IMR-90 (cell line): ENCODE measurements at regions of chr2 and their contacts with region 1.

Region 1: GRCh38 chr2:234550511-234551107 is 53.7 kb upstream of the ARL4C start:
- DNase-seq: peak; percentile 86
- ATAC-seq: peak; percentile 96
- H3K4me3 ChIP-seq: no peak overlapping the region
- H3K27ac ChIP-seq: no peak overlapping the region
- H3K4me1 ChIP-seq: peaks cover 5% of the 10 kb centered on the region; the same call in 1 of the 2 replicates
- H3K27me3 ChIP-seq: no peaks in the 10 kb centered on the region; the same call in 1 of the 2 replicates
- CTCF ChIP-seq: peak; percentile 96
- POLR2A ChIP-seq: peak; percentile 47; the same call in 1 of the 2 replicates
- RAD21 ChIP-seq: peak; percentile 99

Region 2: DNA sequence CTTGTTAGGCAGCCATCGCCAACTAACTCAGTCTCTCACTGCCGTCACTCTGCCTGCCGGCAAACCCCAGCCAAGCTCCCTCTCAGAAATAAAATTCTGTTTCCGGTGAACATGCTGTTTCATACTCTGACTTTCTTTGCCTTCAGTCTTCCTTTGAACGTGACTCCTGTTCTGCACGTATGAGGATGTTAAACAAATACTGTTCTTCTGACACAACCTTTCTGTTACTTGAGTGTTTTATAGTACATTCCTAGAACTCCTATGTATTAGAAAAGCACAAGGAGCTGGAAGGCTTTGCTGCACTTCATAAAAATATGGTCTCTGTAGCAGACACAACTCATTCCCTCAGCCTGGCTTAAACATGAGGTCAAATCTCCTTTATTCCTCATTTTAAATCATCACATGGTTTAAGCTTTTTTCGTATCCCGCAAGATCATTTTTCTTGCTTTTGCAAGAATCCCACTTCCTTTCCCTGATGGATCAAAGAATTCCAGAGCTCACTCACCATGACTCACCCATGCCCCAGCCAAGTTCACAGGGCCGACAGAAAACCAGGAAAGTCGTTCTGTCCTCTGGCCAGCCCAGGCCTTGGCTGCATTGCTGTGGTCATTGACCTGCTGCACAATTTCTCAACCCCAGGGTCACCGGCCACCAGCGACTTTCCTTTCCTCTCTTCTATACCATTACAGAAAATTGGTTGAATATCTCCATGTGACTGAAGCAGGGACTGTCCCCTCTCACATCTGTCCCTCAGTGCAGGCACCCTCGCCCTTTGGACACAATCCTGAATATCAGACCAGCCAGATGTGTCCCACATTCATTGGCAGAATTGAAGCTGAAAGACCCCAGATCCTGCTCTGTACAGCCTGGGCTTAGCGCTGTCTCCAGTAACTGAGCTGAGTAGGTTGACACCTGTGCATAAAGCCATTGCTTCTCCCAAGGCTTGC is 129.4 kb after region 1 on chr2:
- CTCF ChIA-PET with region 1: no interaction called
- POLR2A ChIA-PET with region 1: no interaction called
- dilution Hi-C with region 1: no loop called
- in situ Hi-C with region 1: no loop called
- intact Hi-C with region 1: loop called (anchors 5 kb)
- DNase-seq: peak; percentile 99
- ATAC-seq: peak; percentile 75
- H3K4me3 ChIP-seq: peak overlapping the region; percentile 5; the same call in 1 of the 2 replicates
- H3K27ac ChIP-seq: peak overlapping the region; percentile 90
- H3K4me1 ChIP-seq: peaks cover 34% of the 10 kb centered on the region
- H3K27me3 ChIP-seq: no peaks in the 10 kb centered on the region
- CTCF ChIP-seq: no peak
- POLR2A ChIP-seq: peak; percentile 73; the same call in 1 of the 2 replicates
- RAD21 ChIP-seq: peak; percentile 28

Region 3: DNA sequence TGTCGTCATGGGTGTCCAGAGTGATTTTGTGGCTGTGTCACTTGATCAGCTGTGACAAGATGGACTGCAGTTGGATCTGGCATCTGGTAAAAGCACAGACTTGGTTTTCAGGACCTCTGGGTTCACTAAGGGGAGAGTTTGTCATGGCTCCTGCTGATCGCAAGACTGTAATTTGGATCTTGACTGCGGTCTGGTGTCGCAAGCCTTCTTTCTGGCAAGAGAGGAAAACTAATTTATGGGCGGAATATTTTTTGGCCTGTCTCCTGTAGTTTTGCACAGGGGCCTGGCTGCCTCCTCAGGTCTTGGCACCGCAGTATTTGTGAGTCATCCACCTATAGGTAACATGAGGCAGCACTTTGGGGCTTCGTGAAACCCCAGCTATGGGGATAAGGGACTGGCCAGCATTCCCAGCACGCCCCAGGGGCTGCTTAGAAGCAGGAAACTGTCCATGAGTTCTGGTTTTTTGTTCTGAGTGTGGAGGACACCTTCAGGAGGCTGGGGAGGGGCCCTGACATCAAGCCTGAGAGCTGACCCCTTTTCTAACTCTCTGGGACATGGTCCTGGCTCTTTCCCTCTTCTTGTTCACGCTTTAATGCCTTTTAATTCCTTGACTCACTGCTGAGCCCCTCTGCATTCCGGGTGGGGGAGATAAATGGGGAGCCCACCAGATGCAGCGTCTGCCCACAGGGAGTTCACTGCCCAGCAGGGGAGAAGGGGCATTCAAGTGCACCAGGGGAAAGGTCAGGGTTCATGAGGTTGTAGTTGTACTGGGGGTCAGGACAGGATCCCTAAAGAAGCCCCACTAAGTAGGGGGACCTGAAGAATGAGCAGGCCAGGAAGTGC is 413.4 kb after region 1 on chr2:
- CTCF ChIA-PET with region 1: no interaction called
- POLR2A ChIA-PET with region 1: no interaction called
- dilution Hi-C with region 1: no loop called
- in situ Hi-C with region 1: loop called (anchors 10 kb)
- intact Hi-C with region 1: no loop called
- DNase-seq: peak; percentile 74
- ATAC-seq: peak; percentile 38
- H3K4me3 ChIP-seq: no peak overlapping the region
- H3K27ac ChIP-seq: peak overlapping the region; percentile 73
- H3K4me1 ChIP-seq: peaks cover 38% of the 10 kb centered on the region
- H3K27me3 ChIP-seq: no peaks in the 10 kb centered on the region
- CTCF ChIP-seq: no peak
- POLR2A ChIP-seq: no peak
- RAD21 ChIP-seq: no peak

Region 4: DNA sequence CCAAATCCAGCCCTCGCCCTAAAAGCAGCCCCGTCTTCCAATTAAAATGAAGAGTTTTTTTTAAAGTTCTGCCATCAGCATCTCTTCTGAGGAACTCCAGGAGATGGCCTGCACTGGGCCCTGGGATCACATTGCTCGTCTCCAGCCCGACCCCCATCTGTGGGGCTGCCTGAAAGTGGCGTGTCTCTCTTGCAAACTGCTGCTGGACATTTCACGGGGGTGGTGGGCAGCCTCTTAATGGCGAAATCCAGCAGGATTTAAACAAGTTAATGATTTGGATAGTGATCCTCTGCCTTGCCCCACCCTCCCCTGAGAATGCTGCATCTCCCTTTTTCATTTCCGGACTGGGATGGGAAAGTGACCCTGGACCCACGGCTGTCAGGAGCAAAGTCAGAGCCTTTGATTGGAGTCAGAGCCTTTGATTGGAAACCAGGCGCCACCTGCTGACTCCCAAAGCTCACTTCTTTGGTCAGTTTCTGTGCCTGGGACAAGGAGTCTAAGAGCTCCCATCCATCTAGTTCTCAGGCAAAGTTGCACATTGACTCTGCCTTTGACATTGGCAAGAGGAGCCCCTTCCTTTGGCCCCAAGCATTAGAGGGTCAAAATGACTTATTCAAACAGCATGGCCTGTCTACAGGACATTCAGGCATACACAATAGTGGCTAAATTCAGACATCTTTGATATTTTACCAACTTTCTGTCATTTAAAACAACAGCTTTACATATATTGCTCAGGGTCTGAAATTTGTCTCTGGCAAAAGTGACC is 556.4 kb after region 1 on chr2:
- CTCF ChIA-PET with region 1: interaction called, 3 read pairs
- POLR2A ChIA-PET with region 1: no interaction called
- dilution Hi-C with region 1: loop called (anchors 25 kb)
- in situ Hi-C with region 1: loop called (anchors 5 kb)
- intact Hi-C with region 1: loop called (anchors 2 kb)
- DNase-seq: peak; percentile 76
- ATAC-seq: peak; percentile 97
- H3K4me3 ChIP-seq: no peak overlapping the region
- H3K27ac ChIP-seq: no peak overlapping the region
- H3K4me1 ChIP-seq: peaks cover 4% of the 10 kb centered on the region; the same call in 1 of the 2 replicates
- H3K27me3 ChIP-seq: peaks cover 3% of the 10 kb centered on the region
- CTCF ChIP-seq: peak; percentile 80
- POLR2A ChIP-seq: no peak
- RAD21 ChIP-seq: peak; percentile 89

Region 5: DNA sequence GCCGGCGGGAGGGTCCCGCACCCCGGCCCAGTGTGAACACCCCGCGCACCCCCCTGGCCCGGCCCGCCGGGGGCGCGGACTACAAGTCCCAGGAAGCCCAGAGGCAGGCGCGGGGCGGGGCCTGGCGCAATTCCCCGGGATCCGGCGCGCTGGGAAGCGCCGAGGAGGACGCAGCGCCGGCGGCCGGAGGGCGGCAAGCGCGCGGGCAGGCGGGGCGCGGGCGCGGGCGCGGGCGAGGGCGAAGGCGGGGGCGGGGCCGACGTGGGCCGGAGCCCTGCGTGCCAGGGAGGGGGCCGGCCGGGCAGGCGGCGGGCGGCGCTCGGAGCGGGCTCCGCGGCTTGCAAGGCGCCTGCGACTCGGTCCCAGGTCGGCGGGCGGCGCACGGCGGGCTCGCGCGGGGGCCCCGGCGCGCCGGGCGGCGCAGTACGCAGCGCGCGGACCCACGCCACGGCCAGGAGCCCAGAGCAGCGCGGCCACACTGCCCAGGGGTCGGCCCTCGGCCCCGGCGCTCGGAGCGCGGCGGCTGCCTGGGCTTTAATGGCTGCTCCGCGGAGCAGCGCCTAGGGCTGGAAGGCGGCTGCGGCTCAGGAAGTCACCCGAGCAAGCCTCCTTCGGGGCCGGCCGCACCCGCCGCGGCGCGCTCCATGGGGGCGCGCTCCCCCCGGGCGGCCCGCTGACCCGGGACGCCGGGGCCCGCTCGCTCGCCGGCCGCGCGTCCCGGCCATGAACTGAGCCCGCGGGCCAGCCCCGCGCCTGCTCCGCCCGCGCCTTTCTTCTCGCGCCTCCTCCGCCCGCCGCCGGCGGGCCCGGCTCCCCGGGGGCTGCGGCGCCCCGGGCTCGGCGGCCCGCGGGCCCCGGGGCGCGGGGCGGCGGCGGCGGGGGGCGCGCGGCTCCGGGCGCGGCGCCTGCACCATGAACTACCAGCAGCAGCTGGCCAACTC is 943.4 kb after region 1 on chr2 and contains the start of gene AGAP1:
- CTCF ChIA-PET with region 1: no interaction called
- POLR2A ChIA-PET with region 1: no interaction called
- dilution Hi-C with region 1: no loop called
- in situ Hi-C with region 1: no loop called
- intact Hi-C with region 1: loop called (anchors 5 kb)
- DNase-seq: peak; percentile 80
- ATAC-seq: peak; percentile 89
- H3K4me3 ChIP-seq: peak within 1 kb of the TSS; percentile 99
- H3K27ac ChIP-seq: peak within 1 kb of the TSS; percentile 72
- H3K4me1 ChIP-seq: peaks cover 11% of the 10 kb centered on the region
- H3K27me3 ChIP-seq: 0 out of 2 replicates have a peak, but pooled peaks cover 2% of the 10 kb centered on the region
- CTCF ChIP-seq: no peak
- POLR2A ChIP-seq: no peak
- RAD21 ChIP-seq: no peak
- total RNA-seq, gene AGAP1: 11.7 and 15.1 TPM in 2 replicates